HCT116 (cell line): ENCODE measurements at regions of chr16 and their contacts with region 1.

Region 1: GRCh38 chr16:28846080-28846932 is at the start of gene TUFM:
- DNase-seq: peak; percentile 97
- ATAC-seq: peak; percentile 92
- H3K4me3 ChIP-seq: peak within 1 kb of the TSS; percentile 97 to 100
- H3K27ac ChIP-seq: peak within 1 kb of the TSS; percentile 77
- H3K4me1 ChIP-seq: peaks cover 8 to 19% of the 10 kb centered on the region in 2 experiments; a peak in 3 of 4 replicates
- H3K27me3 ChIP-seq: no peaks in the 10 kb centered on the region
- CTCF ChIP-seq: peak; percentile 29 to 62 (median 56); a peak in 5 of 6 replicates
- POLR2A ChIP-seq: peak; percentile 30
- RAD21 ChIP-seq: peak; percentile 37; the same call in 1 of the 2 replicates
- total RNA-seq, gene TUFM: 361 TPM

Region 2: GRCh38 chr16:28823872-28824716 is 22.2 kb before region 1 on chr16:
- CTCF ChIA-PET with region 1: no interaction called
- POLR2A ChIA-PET with region 1: interaction called, 20 read pairs
- RAD21 ChIA-PET with region 1: no interaction called
- intact Hi-C with region 1: no loop called
- DNase-seq: peak; percentile 94
- ATAC-seq: peak; percentile 81
- H3K4me3 ChIP-seq: peak overlapping the region; percentile 66 to 72
- H3K27ac ChIP-seq: peak overlapping the region; percentile 100
- H3K4me1 ChIP-seq: peaks cover 5 to 22% of the 10 kb centered on the region in 2 experiments; a peak in 3 of 4 replicates
- H3K27me3 ChIP-seq: no peaks in the 10 kb centered on the region
- CTCF ChIP-seq: peak in 1 of 3 experiments; percentile 11; a peak in 1 of 6 replicates
- POLR2A ChIP-seq: peak; percentile 41
- RAD21 ChIP-seq: no peak

Region 3: GRCh38 chr16:28863929-28864793 is 17.9 kb after region 1 on chr16:
- CTCF ChIA-PET with region 1: interaction called, 5 read pairs
- POLR2A ChIA-PET with region 1: interaction called, 20 read pairs
- RAD21 ChIA-PET with region 1: no interaction called
- intact Hi-C with region 1: no loop called
- DNase-seq: no peak
- ATAC-seq: peak; percentile 9
- H3K4me3 ChIP-seq: peak overlapping the region; percentile 94
- H3K27ac ChIP-seq: peak overlapping the region; percentile 84
- H3K4me1 ChIP-seq: peaks cover 16 to 24% of the 10 kb centered on the region in 2 experiments
- H3K27me3 ChIP-seq: no peaks in the 10 kb centered on the region
- CTCF ChIP-seq: no peak
- POLR2A ChIP-seq: no peak
- RAD21 ChIP-seq: no peak